ENCODE measurements at regions of chr3 and their contacts with region 1.

Region 1: GRCh38 chr3:41961750-41962679 is at the start of gene ULK4:
- DNase-seq: peak; percentile 89 to 99 (median 95)
- ATAC-seq: peak; percentile 84
- H3K4me3 ChIP-seq: peak within 1 kb of the TSS; percentile 84 to 99
- H3K4me3 Mint-ChIP-seq: peak within 1 kb of the TSS; percentile 100
- H3K27ac ChIP-seq: peak within 1 kb of the TSS; percentile 85 to 96
- H3K27ac Mint-ChIP-seq: peak within 1 kb of the TSS; percentile 99
- H3K4me1 ChIP-seq: peaks cover 15% of the 10 kb centered on the region
- H3K4me1 Mint-ChIP-seq: peaks cover 24% of the 10 kb centered on the region
- H3K27me3 ChIP-seq: no peaks in the 10 kb centered on the region
- H3K27me3 Mint-ChIP-seq: no peaks in the 10 kb centered on the region
- CTCF ChIP-seq: no peak
- total RNA-seq, gene ULK4: 11.9 to 15.1 TPM

Region 2: GRCh38 chr3:41117398-41117870 is 844.6 kb before region 1 on chr3:
- CTCF ChIA-PET with region 1: no interaction called
- POLR2A ChIA-PET with region 1: no interaction called
- intact Hi-C with region 1: loop called in 1 of 2 experiments (anchors 5 kb)
- DNase-seq: peak; percentile 65 to 94 (median 83)
- ATAC-seq: peak; percentile 84
- H3K4me3 ChIP-seq: peak overlapping the region; percentile 18 to 27
- H3K4me3 Mint-ChIP-seq: peak overlapping the region; percentile 54
- H3K27ac ChIP-seq: peak overlapping the region; percentile 45 to 80
- H3K27ac Mint-ChIP-seq: peak overlapping the region; percentile 96
- H3K4me1 ChIP-seq: peaks cover 25% of the 10 kb centered on the region
- H3K4me1 Mint-ChIP-seq: peaks cover 33% of the 10 kb centered on the region
- H3K27me3 ChIP-seq: no peaks in the 10 kb centered on the region
- H3K27me3 Mint-ChIP-seq: no peaks in the 10 kb centered on the region
- CTCF ChIP-seq: no peak

Region 3: GRCh38 chr3:41888368-41889076 is 73.5 kb before region 1 on chr3:
- CTCF ChIA-PET with region 1: no interaction called
- POLR2A ChIA-PET with region 1: no interaction called
- intact Hi-C with region 1: no loop called
- DNase-seq: no peak
- ATAC-seq: no peak
- H3K4me3 ChIP-seq: no peak overlapping the region
- H3K4me3 Mint-ChIP-seq: no peak overlapping the region
- H3K27ac ChIP-seq: no peak overlapping the region
- H3K27ac Mint-ChIP-seq: no peak overlapping the region
- H3K4me1 ChIP-seq: no peaks in the 10 kb centered on the region
- H3K4me1 Mint-ChIP-seq: no peaks in the 10 kb centered on the region
- H3K27me3 ChIP-seq: no peaks in the 10 kb centered on the region
- H3K27me3 Mint-ChIP-seq: no peaks in the 10 kb centered on the region
- CTCF ChIP-seq: no peak

Region 4: DNA sequence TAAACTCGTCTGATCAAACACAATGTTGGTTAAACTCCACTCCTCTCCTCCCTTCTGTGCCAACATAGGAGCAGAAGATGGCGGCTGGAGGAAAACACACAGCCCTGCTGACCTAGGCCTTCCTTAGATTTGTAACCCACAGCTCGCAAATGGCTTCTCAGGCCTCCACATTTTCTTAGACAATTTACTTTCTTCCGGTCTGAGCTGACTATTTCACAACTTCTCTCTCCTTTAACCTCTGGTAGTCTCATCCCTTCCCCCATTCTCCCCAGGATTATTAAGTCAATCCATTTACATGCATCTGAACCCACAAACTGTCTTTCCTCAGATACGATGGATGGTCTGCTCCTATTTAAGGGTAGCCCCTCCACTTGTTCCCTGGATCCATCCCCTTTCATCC is 25.6 kb after region 1 on chr3:
- CTCF ChIA-PET with region 1: no interaction called
- POLR2A ChIA-PET with region 1: no interaction called
- intact Hi-C with region 1: no loop called
- DNase-seq: no peak
- ATAC-seq: no peak
- H3K4me3 ChIP-seq: no peak overlapping the region
- H3K4me3 Mint-ChIP-seq: no peak overlapping the region
- H3K27ac ChIP-seq: no peak overlapping the region
- H3K27ac Mint-ChIP-seq: no peak overlapping the region
- H3K4me1 ChIP-seq: no peaks in the 10 kb centered on the region
- H3K4me1 Mint-ChIP-seq: no peaks in the 10 kb centered on the region
- H3K27me3 ChIP-seq: no peaks in the 10 kb centered on the region
- H3K27me3 Mint-ChIP-seq: no peaks in the 10 kb centered on the region
- CTCF ChIP-seq: no peak

Region 5: DNA sequence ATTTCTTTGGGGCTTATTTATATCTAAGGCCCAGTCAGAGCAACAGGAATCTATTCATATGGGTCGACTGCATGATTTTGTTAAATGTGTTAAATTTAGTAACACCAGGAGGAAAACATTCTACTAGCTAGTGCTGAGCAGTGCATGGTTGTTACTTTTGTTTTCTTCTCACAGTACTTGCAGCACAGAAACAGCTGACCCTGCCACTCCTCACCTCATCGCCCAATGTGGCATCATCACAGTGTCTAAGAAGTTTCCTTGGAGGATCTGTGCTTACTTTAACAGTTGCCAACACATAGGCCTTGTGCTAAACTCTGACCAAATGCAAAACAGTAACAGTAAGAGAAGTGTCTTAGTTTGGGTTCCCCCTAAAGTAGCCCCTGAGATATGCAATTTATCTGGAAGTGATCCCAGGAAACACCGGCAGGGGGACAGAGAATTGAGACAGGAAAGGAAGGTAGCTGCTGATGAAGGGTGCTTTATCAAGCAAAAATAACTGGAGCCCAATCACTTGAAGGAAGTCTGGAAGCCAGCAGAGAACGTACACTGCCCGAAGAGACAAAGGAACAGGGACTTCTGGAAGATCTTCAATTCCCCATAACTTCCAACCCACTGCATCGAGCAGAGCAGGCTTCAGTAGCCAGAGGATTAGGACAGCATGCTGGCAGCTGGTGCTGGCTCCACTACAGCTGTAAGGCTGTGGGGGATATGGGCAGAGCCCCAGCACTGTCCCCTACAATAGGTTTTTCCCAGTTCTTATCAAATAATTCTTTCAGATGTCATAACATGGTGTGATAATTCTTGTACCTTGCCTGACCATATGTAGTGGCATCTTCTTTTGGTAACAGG is 35.9 kb after region 1 on chr3:
- CTCF ChIA-PET with region 1: no interaction called
- POLR2A ChIA-PET with region 1: no interaction called
- intact Hi-C with region 1: no loop called
- DNase-seq: peak in 1 of 9 experiments; percentile 19
- ATAC-seq: no peak
- H3K4me3 ChIP-seq: no peak overlapping the region
- H3K4me3 Mint-ChIP-seq: no peak overlapping the region
- H3K27ac ChIP-seq: no peak overlapping the region
- H3K27ac Mint-ChIP-seq: no peak overlapping the region
- H3K4me1 ChIP-seq: no peaks in the 10 kb centered on the region
- H3K4me1 Mint-ChIP-seq: no peaks in the 10 kb centered on the region
- H3K27me3 ChIP-seq: no peaks in the 10 kb centered on the region
- H3K27me3 Mint-ChIP-seq: peaks cover 3% of the 10 kb centered on the region
- CTCF ChIP-seq: no peak

Region 6: GRCh38 chr3:42012935-42013690 is 51.1 kb after region 1 on chr3:
- CTCF ChIA-PET with region 1: interaction called, 3 read pairs
- POLR2A ChIA-PET with region 1: interaction called, 11 read pairs
- intact Hi-C with region 1: loop called (anchors 1 kb)
- DNase-seq: peak; percentile 56 to 89 (median 71)
- ATAC-seq: peak; percentile 73
- H3K4me3 ChIP-seq: peak overlapping the region; percentile 85 to 89
- H3K4me3 Mint-ChIP-seq: peak overlapping the region; percentile 91
- H3K27ac ChIP-seq: peak overlapping the region; percentile 72 to 98
- H3K27ac Mint-ChIP-seq: peak overlapping the region; percentile 98
- H3K4me1 ChIP-seq: peaks cover 20% of the 10 kb centered on the region
- H3K4me1 Mint-ChIP-seq: peaks cover 35% of the 10 kb centered on the region
- H3K27me3 ChIP-seq: no peaks in the 10 kb centered on the region
- H3K27me3 Mint-ChIP-seq: no peaks in the 10 kb centered on the region
- CTCF ChIP-seq: no peak

Region 7: GRCh38 chr3:42080452-42080891 is 118.5 kb after region 1 on chr3:
- CTCF ChIA-PET with region 1: no interaction called
- POLR2A ChIA-PET with region 1: no interaction called
- intact Hi-C with region 1: loop called in 1 of 2 experiments (anchors 5 kb)
- DNase-seq: peak in 3 of 9 experiments; percentile 23 to 47 (median 39)
- ATAC-seq: peak; percentile 52
- H3K4me3 ChIP-seq: no peak overlapping the region
- H3K4me3 Mint-ChIP-seq: no peak overlapping the region
- H3K27ac ChIP-seq: peak overlapping the region in 1 of 2 experiments; percentile 17
- H3K27ac Mint-ChIP-seq: peak overlapping the region; percentile 78
- H3K4me1 ChIP-seq: peaks cover 10% of the 10 kb centered on the region
- H3K4me1 Mint-ChIP-seq: peaks cover 53% of the 10 kb centered on the region
- H3K27me3 ChIP-seq: no peaks in the 10 kb centered on the region
- H3K27me3 Mint-ChIP-seq: no peaks in the 10 kb centered on the region
- CTCF ChIP-seq: no peak

Measured in CD8-positive, alpha-beta T cell (primary cell).